PC-3 (cell line): ENCODE measurements at regions of chr5 and their contacts with region 1.

Region 1: DNA sequence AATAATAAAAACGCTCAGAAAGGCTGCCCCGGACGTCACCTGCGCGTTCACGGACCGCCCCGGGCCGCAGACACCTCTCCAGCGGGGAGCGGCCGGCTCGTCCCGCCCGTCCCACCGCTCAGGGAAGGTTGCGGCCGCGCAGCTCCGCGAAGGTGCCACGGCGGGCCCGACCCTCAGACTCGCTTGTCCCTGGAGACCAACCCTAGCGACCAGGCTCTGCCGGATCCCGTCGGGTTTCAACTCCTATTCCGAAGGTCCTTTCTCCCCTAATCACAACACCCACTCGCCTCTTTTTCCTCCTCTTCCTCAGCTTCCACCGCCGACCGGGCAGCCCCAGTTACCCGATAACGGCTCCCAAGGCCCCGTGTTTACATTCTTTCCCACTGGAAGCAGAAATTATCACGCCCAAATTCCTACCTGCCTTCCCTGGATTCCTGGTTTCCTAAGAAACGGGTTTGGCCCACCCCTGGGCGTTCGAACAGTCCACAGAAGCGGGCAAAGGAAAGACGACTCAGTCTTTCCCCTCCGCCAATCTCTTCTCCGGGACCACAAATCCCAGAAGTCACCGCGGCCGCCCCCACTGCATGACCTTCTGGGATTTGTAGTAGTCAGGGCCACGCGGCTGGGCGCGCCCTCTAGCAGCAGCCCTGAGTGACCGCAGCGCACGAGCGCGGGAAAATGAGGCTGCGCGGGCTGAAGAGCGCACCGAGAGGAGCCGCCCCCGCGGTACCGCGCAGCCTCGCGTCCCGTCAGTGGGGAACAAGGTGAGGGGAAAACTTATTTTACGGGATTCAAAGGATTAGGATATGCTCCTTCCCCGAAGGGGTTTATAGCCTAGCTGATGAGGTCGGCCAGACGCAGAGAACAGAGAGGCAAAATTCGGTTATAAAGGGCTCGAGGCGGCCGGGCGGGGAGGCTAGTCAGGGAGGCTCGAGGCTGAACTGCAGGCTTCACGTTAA is at the start of gene TTC33:
- DNase-seq: peak; percentile 97
- ATAC-seq: peak; percentile 87
- H3K4me3 ChIP-seq: peak within 1 kb of the TSS; percentile 85
- H3K27ac ChIP-seq: peak within 1 kb of the TSS; percentile 38
- H3K4me1 ChIP-seq: peaks cover 10% of the 10 kb centered on the region
- H3K27me3 ChIP-seq: no peaks in the 10 kb centered on the region
- CTCF ChIP-seq: peak; percentile 84
- total RNA-seq, gene TTC33: 9.0 and 11.6 TPM in 2 replicates

Region 2: DNA sequence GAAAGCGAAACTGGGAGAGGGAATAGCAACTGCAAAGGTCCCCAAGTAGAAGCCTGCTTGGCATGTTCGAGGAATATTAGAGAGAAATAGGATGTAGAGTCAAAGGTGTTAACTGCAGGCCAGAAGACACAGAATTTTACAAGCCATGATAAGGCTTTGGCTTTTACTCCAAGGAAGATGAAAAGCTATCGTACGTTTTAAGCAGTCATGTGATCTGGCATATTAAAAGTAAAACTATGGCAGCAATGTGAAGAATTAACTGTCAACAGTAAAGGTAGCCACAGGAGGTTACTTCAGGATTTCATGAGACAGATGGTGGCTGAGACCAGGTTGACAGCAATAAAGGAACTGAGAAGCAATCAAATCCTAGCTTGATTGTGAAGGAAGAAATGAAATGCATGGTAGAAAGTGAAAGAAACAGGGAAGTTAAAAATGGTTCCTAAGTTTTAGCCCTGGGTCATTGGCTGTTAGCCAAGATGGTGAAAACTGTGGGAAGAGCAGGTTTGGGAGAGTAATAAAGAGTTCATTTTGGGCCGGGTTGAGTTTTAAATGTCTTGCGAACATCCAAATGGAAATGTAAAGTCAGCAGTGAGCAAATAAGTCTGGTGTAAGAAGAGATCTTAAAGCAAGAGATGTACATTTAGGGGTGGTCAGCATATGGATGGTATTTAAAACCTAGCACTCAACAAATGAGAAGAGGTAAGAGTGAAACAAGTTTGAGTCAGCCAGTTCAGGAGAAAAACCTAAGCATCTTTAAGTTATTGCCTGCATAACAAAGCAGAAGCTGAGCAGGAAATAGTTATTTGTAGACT is 20.4 kb after region 1 on chr5:
- CTCF ChIA-PET with region 1: no interaction called
- POLR2A ChIA-PET with region 1: no interaction called
- intact Hi-C with region 1: loop called (anchors 2 kb)
- DNase-seq: no peak
- ATAC-seq: no peak
- H3K4me3 ChIP-seq: no peak overlapping the region
- H3K27ac ChIP-seq: peak overlapping the region; percentile 73
- H3K4me1 ChIP-seq: peaks cover 29% of the 10 kb centered on the region
- H3K27me3 ChIP-seq: no peaks in the 10 kb centered on the region
- CTCF ChIP-seq: no peak

Region 3: DNA sequence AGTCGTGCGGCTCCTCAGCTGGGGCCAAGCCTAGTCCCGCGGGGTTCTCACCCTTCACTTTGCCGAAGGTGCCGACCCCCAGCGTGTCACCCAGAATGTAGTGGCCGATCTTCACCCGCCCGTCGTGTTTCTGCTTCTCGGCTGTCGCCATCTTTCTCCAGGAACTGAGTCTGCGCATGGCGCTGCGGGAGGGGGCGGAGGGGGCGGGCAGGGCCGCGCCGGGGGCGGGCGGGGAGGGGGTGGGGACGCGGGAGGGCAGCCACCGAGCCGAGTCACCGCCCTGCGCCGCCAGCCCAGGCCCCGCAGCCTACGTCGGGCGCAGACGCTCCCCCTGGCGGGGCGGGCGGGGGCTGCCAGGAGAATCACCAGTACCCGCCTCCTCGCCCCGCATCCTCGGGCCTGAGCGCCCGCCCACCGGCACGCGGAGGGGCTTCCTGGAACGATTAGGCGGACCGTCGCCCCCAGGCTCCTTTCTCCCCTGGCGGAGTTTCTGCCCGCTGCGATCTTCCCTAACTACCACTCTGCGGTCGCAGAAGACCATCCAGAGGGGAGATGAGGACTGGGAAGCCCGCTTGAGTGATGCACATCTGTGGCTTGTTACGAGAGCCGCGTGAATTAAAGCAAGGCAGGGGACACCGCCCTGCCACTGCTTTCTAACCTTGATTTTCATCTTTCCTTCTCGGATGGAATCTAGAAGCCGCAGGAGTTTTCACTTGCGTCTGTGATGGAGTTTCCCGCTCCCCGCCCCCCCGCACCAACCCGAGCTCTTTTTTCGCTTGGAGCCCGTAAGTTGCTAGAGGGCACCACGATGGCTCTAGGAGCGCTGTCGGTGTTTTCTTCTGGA is 42.5 kb after region 1 on chr5 and contains the start of gene PRKAA1:
- CTCF ChIA-PET with region 1: interaction called, 8 read pairs
- POLR2A ChIA-PET with region 1: no interaction called
- intact Hi-C with region 1: loop called (anchors 1 kb)
- DNase-seq: peak; percentile 91
- ATAC-seq: peak; percentile 81
- H3K4me3 ChIP-seq: peak within 1 kb of the TSS; percentile 83
- H3K27ac ChIP-seq: peak within 1 kb of the TSS; percentile 87
- H3K4me1 ChIP-seq: peaks cover 26% of the 10 kb centered on the region
- H3K27me3 ChIP-seq: no peaks in the 10 kb centered on the region
- CTCF ChIP-seq: peak; percentile 47
- total RNA-seq, gene PRKAA1: 84.5 and 86.0 TPM in 2 replicates

Region 4: GRCh38 chr5:40834849-40835787 is 79.4 kb after region 1 on chr5 and contains the start of gene RPL37:
- CTCF ChIA-PET with region 1: no interaction called
- POLR2A ChIA-PET with region 1: no interaction called
- intact Hi-C with region 1: loop called (anchors 1 kb)
- DNase-seq: peak; percentile 99
- ATAC-seq: peak; percentile 98
- H3K4me3 ChIP-seq: peak within 1 kb of the TSS; percentile 87
- H3K27ac ChIP-seq: peak within 1 kb of the TSS; percentile 70
- H3K4me1 ChIP-seq: peaks cover 28% of the 10 kb centered on the region
- H3K27me3 ChIP-seq: no peaks in the 10 kb centered on the region
- CTCF ChIP-seq: no peak
- total RNA-seq, gene RPL37: 2,333 and 2,823 TPM in 2 replicates

Region 5: GRCh38 chr5:40879163-40879942 is 123.7 kb after region 1 on chr5:
- CTCF ChIA-PET with region 1: no interaction called
- POLR2A ChIA-PET with region 1: no interaction called
- intact Hi-C with region 1: loop called (anchors 1 kb)
- DNase-seq: peak; percentile 66
- ATAC-seq: peak; percentile 60; the same call in 1 of the 2 replicates
- H3K4me3 ChIP-seq: no peak overlapping the region
- H3K27ac ChIP-seq: no peak overlapping the region
- H3K4me1 ChIP-seq: no peaks in the 10 kb centered on the region
- H3K27me3 ChIP-seq: no peaks in the 10 kb centered on the region
- CTCF ChIP-seq: peak; percentile 87

Region 6: DNA sequence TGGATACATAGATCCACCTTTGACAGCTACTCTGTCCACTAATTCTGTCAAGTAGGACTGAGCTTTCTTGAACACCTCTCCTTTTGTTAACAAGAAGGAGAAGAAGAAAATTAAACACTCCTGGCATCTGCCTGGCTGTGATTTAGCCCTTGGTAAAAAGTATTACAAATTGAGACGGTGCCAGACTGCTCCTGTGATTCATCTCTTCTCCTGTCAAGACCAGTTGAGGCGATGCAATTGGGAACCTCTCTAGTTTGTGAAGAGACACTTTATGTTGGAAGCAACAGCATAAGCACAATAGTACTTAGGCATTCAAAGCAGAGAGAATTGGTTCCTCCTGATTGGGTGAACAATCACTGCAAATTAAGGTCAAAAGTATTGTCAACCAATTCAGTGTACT is 1740.2 kb after region 1 on chr5:
- CTCF ChIA-PET with region 1: no interaction called
- POLR2A ChIA-PET with region 1: no interaction called
- intact Hi-C with region 1: no loop called
- DNase-seq: peak; percentile 40
- ATAC-seq: no peak
- H3K4me3 ChIP-seq: no peak overlapping the region
- H3K27ac ChIP-seq: no peak overlapping the region
- H3K4me1 ChIP-seq: peaks cover 21% of the 10 kb centered on the region
- H3K27me3 ChIP-seq: no peaks in the 10 kb centered on the region
- CTCF ChIP-seq: no peak